ENCODE measurements at regions of chr17 and their contacts with region 1.

Region 1: DNA sequence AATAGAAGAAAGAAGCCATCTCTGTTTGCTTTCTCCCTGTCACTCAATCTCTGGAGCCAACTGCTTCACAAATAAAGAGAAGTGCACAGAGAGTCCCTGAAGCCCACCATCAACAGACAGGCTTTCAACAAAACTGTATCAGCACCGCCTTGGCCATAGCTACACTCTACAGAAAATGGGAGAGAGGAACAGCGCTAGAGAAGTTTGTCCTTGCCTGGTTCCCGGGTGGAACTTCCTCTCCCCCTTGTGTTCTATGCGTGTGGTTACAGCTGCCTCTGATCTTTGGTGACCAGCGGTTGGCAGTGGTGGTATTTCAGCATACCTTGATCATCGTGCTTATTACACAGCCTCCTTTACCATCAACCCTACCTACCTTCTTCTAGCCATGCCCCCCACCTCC is 91.4 kb upstream of the CCL2 start:
- DNase-seq: peak in 1 of 5 donors; percentile 28
- ATAC-seq: peak in 3 of 4 donors; percentile 65 to 77 (median 72)
- H3K4me3 ChIP-seq: no peak overlapping the region
- H3K27ac ChIP-seq: no peak overlapping the region
- H3K4me1 ChIP-seq: peaks cover 0 to 7% (median 0%) of the 10 kb centered on the region in 12 donors
- H3K27me3 ChIP-seq: peaks cover 0 to 51% (median 12%) of the 10 kb centered on the region in 9 donors
- CTCF ChIP-seq: peak; percentile 26 to 60 (median 42)
- POLR2A ChIP-seq: no peak

Region 2: GRCh38 chr17:33779225-33779591 is 384.4 kb before region 1 on chr17:
- intact Hi-C with region 1: loop called in 5 of 10 experiments (anchors 1 to 5 kb)
- DNase-seq: peak in 2 of 5 donors; percentile 30 to 31
- ATAC-seq: peak in 1 of 4 donors; percentile 28
- H3K4me3 ChIP-seq: no peak overlapping the region
- H3K27ac ChIP-seq: no peak overlapping the region
- H3K4me1 ChIP-seq: no peaks in the 10 kb centered on the region
- H3K27me3 ChIP-seq: peaks cover 0 to 34% (median 0%) of the 10 kb centered on the region in 9 donors
- CTCF ChIP-seq: peak; percentile 91 to 98 (median 95)
- POLR2A ChIP-seq: no peak

Region 3: DNA sequence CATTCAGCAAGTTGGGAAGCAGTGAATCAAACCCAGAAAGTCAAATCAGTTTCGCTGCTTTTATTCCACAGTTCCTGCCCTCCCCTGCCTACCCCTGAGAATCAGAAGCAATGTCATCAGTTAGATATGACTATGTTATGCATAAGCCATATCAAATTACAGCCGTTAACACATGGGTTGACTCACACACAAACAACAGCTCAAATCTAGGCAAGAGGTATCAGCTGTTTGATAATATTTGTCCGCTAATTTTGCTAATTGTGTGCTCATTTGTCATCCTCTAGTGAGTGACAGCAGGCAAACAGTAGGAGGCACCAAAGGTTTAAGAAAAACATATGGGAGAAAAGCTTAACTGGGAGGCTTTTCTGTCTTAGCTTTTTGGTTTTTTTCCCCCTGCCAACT is 235.9 kb before region 1 on chr17:
- intact Hi-C with region 1: loop called in 5 of 10 experiments (anchors 1 to 10 kb)
- DNase-seq: no peak
- ATAC-seq: no peak
- H3K4me3 ChIP-seq: no peak overlapping the region
- H3K27ac ChIP-seq: no peak overlapping the region
- H3K4me1 ChIP-seq: no peaks in the 10 kb centered on the region
- H3K27me3 ChIP-seq: peaks cover 0 to 40% (median 0%) of the 10 kb centered on the region in 9 donors
- CTCF ChIP-seq: peak in 11 of 12 donors; percentile 9 to 55 (median 42)
- POLR2A ChIP-seq: no peak

Region 4: DNA sequence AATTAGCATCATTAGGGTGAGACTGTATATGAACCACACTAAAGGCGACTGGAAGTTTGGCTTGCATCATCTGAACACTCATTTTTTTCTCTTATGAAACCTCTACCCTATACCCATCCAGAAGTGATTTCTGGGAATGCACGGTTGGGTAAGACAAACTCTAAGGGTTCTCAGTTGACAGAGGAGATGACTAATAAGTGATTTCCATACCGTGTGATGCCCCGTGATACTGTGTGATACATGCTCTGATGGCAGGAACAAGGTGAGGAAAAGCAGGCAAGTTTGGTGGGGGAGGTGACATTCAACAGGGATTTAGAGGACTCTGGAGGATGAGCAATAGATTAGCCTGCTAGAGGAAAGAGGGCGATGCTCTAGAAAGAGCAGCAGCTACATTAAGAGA is 64.9 kb before region 1 on chr17:
- intact Hi-C with region 1: loop called in 2 of 10 experiments (anchors 10 kb)
- DNase-seq: no peak
- ATAC-seq: no peak
- H3K4me3 ChIP-seq: no peak overlapping the region
- H3K27ac ChIP-seq: no peak overlapping the region
- H3K4me1 ChIP-seq: no peaks in the 10 kb centered on the region
- H3K27me3 ChIP-seq: peaks cover 0 to 18% (median 4%) of the 10 kb centered on the region in 9 donors
- CTCF ChIP-seq: no peak
- POLR2A ChIP-seq: no peak

Measured in heart left ventricle (tissue), 16 donors.